Calu3 (cell line): ENCODE measurements at regions of chr16 and their contacts with region 1.

Region 1: DNA sequence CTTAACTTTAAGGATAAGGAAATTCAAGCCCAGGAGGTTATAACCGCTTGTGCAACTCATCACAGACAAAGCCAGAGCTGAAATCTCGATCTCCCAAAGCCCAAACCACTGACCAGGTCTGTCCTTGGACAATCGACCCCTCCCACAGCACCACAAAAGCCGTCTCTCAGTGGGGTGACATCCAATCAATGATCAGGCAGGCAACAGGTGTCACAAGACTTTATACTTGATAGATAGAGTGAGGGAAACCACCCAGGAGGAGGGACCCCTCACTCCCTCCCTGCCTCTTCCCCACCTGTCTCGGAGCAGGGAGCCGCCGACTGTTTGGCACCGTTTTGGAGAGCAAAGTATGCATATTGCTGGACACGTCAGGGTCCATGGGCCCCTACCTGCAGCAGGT is 14.5 kb upstream of the SDR42E2 start:
- DNase-seq: no peak
- H3K4me3 Mint-ChIP-seq: no peak overlapping the region
- H3K27ac Mint-ChIP-seq: no peak overlapping the region
- H3K4me1 Mint-ChIP-seq: no peaks in the 10 kb centered on the region
- H3K27me3 Mint-ChIP-seq: peaks cover 81% of the 10 kb centered on the region
- CTCF ChIP-seq: no peak

Region 2: GRCh38 chr16:22063888-22064467 is 83.9 kb before region 1 on chr16:
- CTCF ChIA-PET with region 1: no interaction called
- intact Hi-C with region 1: no loop called
- DNase-seq: no peak
- H3K4me3 Mint-ChIP-seq: no peak overlapping the region
- H3K27ac Mint-ChIP-seq: no peak overlapping the region
- H3K4me1 Mint-ChIP-seq: no peaks in the 10 kb centered on the region
- H3K27me3 Mint-ChIP-seq: no peaks in the 10 kb centered on the region
- CTCF ChIP-seq: no peak

Region 3: GRCh38 chr16:22123759-22124490 is 23.9 kb before region 1 on chr16:
- CTCF ChIA-PET with region 1: interaction called, 10 read pairs
- intact Hi-C with region 1: no loop called
- DNase-seq: no peak
- H3K4me3 Mint-ChIP-seq: no peak overlapping the region
- H3K27ac Mint-ChIP-seq: no peak overlapping the region
- H3K4me1 Mint-ChIP-seq: no peaks in the 10 kb centered on the region
- H3K27me3 Mint-ChIP-seq: peaks cover 48% of the 10 kb centered on the region
- CTCF ChIP-seq: no peak

Region 4: GRCh38 chr16:22161999-22162655 is 14.3 kb after region 1 on chr16 and contains the start of gene SDR42E2:
- CTCF ChIA-PET with region 1: no interaction called
- intact Hi-C with region 1: no loop called
- DNase-seq: peak; percentile 19
- H3K4me3 Mint-ChIP-seq: no peak within 1 kb of the TSS
- H3K27ac Mint-ChIP-seq: no peak within 1 kb of the TSS
- H3K4me1 Mint-ChIP-seq: no peaks in the 10 kb centered on the region
- H3K27me3 Mint-ChIP-seq: peaks cover 42% of the 10 kb centered on the region
- CTCF ChIP-seq: no peak
- total RNA-seq, gene SDR42E2: not detected in 2 replicates

Region 5: GRCh38 chr16:22623351-22623781 is 475.5 kb after region 1 on chr16:
- CTCF ChIA-PET with region 1: no interaction called
- intact Hi-C with region 1: no loop called
- DNase-seq: no peak
- H3K4me3 Mint-ChIP-seq: no peak overlapping the region
- H3K27ac Mint-ChIP-seq: no peak overlapping the region
- H3K4me1 Mint-ChIP-seq: no peaks in the 10 kb centered on the region
- H3K27me3 Mint-ChIP-seq: no peaks in the 10 kb centered on the region
- CTCF ChIP-seq: no peak